Panc1 (cell line): ENCODE measurements at regions of chr6 and their contacts with region 1.

Region 1: GRCh38 chr6:33410050-33410710 is 634 bp upstream of the PHF1 start:
- DNase-seq: peak; percentile 72
- ATAC-seq: peak; percentile 94
- H3K4me3 ChIP-seq: peak overlapping the region; percentile 67 to 83
- H3K27ac ChIP-seq: peak overlapping the region; percentile 93
- H3K4me1 ChIP-seq: peaks cover 21% of the 10 kb centered on the region
- H3K27me3 ChIP-seq: no peaks in the 10 kb centered on the region
- CTCF ChIP-seq: no peak

Region 2: DNA sequence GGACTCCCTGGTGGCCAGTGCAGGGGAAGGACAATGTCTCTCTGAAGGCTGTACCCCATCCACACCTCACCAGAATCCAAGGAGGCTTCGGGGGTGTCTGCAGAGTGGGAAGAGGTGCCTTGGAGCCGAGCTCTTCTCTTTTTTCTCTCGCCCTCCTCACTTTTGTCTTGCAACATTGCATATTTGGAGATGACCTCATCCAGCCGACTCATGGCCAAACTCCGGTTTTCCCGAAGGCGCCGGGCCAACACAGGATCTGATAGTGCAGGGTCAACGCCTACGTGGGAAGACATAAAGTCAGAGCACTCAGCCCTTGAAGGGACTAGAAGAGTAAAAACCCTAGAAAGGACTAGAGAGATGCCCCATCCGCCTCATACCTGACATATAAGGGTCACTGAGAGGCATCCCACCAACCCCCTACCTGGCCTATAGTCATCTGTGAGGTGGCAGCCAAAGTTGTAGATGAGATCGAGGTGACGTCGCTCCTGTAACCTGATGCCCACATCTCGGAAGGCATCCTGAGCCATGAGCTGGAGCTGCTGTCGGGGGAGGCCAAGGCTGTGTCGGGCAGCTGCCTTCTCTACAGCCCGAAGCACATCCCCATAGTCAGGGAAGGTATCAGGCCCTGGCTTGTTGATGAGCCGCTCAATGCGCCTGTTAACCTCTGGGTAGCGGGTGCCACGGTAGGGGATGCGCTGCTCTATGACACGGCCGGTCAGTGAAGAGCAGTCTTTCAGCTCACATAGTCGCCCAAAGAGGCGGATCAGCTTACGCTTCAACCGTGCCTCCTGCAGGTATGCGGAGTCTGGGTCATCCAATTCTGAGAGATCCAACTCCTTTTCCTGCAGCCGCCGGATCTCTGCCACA is 89.6 kb before region 1 on chr6:
- CTCF ChIA-PET with region 1: interaction called, 11 read pairs
- POLR2A ChIA-PET with region 1: no interaction called
- in situ Hi-C with region 1: no loop called
- intact Hi-C with region 1: no loop called
- DNase-seq: no peak
- ATAC-seq: no peak
- H3K4me3 ChIP-seq: peak overlapping the region; percentile 65 to 81
- H3K27ac ChIP-seq: peak overlapping the region; percentile 89
- H3K4me1 ChIP-seq: peaks cover 54% of the 10 kb centered on the region
- H3K27me3 ChIP-seq: no peaks in the 10 kb centered on the region
- CTCF ChIP-seq: no peak